Endothelial cell of umbilical vein (primary cell): ENCODE measurements at regions of chr12 and their contacts with region 1.

Region 1: DNA sequence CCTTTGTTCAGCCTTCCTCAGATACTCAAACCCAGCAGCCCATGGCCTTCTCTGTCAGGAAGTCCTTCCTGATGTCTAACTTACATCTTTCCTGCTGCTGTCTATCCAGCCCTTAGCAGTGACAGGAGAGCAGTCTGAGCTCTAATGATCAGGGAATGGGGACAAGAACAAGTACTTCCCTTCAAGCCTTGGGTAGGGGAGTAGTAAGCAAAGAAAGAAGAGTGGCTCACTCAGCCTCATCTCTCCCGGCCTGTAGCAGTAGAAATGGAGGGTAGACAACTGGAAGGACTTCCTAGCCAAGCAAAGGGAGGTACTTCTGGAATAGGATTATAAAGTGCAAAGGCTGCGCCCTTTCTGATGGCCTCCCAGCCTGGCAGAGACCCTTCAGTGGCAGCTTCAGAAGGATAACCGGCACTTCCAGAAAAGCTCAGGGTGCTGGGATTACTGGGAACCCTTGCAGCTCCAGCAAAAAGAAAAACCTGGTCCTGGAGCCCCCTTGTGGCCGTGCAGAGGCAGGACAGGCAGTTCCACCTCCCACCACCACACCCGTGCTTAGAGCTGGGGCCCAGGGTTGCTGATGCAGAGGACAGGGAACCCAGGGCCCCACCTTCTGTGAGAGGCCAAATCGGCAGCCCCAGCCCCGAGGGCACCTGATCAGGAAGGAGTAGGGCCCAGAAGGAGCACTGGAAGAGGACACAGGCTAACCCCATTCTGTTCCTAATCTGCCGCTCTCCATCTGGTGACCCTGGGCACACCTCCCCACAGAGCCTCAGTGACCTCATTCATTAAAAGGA is 12.4 kb upstream of the SMUG1 start:
- DNase-seq: peak; percentile 52
- H3K4me3 ChIP-seq: no peak overlapping the region
- H3K27ac ChIP-seq: no peak overlapping the region
- H3K4me1 ChIP-seq: no peaks in the 10 kb centered on the region
- H3K27me3 ChIP-seq: peaks cover 22 to 37% of the 10 kb centered on the region in 2 experiments
- CTCF ChIP-seq: peak; percentile 86 to 99
- POLR2A ChIP-seq: no peak

Region 2: GRCh38 chr12:53995378-53996239 is 205.6 kb before region 1 on chr12:
- CTCF ChIA-PET with region 1: interaction called, 17 read pairs
- POLR2A ChIA-PET with region 1: no interaction called
- dilution Hi-C with region 1: no loop called
- intact Hi-C with region 1: no loop called
- DNase-seq: no peak
- H3K4me3 ChIP-seq: peak overlapping the region in 1 of 3 experiments; percentile 23
- H3K27ac ChIP-seq: no peak overlapping the region
- H3K4me1 ChIP-seq: no peaks in the 10 kb centered on the region
- H3K27me3 ChIP-seq: peaks cover 85 to 99% of the 10 kb centered on the region in 2 experiments
- CTCF ChIP-seq: no peak
- POLR2A ChIP-seq: no peak

Region 3: GRCh38 chr12:54032627-54033100 is 168.5 kb before region 1 on chr12 and contains the start of gene HOXC5:
- CTCF ChIA-PET with region 1: interaction called, 91 read pairs
- POLR2A ChIA-PET with region 1: no interaction called
- dilution Hi-C with region 1: no loop called
- intact Hi-C with region 1: loop called (anchors 1 kb)
- DNase-seq: peak; percentile 37
- H3K4me3 ChIP-seq: no peak within 1 kb of the TSS
- H3K27ac ChIP-seq: no peak within 1 kb of the TSS
- H3K4me1 ChIP-seq: no peaks in the 10 kb centered on the region
- H3K27me3 ChIP-seq: peaks cover 79 to 88% of the 10 kb centered on the region in 2 experiments
- CTCF ChIP-seq: peak; percentile 79 to 81
- POLR2A ChIP-seq: no peak
- total RNA-seq, gene HOXC5: not detected in 2 replicates

Region 4: GRCh38 chr12:54184415-54184805 is 16.8 kb before region 1 on chr12:
- CTCF ChIA-PET with region 1: interaction called, 101 read pairs
- POLR2A ChIA-PET with region 1: no interaction called
- dilution Hi-C with region 1: no loop called
- intact Hi-C with region 1: no loop called
- DNase-seq: no peak
- H3K4me3 ChIP-seq: no peak overlapping the region
- H3K27ac ChIP-seq: no peak overlapping the region
- H3K4me1 ChIP-seq: no peaks in the 10 kb centered on the region
- H3K27me3 ChIP-seq: no peaks in the 10 kb centered on the region
- CTCF ChIP-seq: no peak
- POLR2A ChIP-seq: no peak

Region 5: DNA sequence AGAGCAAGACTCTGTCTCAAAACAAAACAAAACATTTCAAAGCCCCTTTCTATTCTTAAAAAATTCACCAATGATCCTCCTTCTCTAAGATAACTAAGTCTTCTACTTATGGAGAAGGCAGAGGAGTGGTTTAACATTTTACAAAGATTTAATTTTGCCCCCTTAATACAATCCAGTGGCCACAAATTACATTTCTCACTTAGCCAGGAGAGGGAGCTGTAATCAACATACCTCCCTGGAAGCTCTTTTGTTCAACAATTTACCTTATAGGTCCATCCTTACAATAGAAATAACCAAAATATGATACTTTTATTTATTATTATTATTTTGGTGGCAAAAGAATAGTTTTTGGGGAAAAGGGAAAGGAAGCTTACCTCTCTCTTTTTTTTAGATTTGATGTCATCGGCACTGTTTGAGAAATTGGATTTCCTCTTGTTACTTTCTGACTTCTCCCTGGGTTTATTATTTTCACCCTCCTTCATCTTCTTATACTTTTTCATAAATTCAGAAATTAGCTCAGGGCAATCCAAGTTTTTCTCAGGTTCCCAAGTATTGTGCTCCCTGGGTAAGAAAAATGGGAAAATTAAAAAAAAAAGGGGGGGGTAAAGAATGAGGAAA is 50.6 kb after region 1 on chr12:
- CTCF ChIA-PET with region 1: no interaction called
- POLR2A ChIA-PET with region 1: no interaction called
- dilution Hi-C with region 1: no loop called
- intact Hi-C with region 1: no loop called
- DNase-seq: peak; percentile 67
- H3K4me3 ChIP-seq: no peak overlapping the region
- H3K27ac ChIP-seq: no peak overlapping the region
- H3K4me1 ChIP-seq: no peaks in the 10 kb centered on the region
- H3K27me3 ChIP-seq: no peaks in the 10 kb centered on the region
- CTCF ChIP-seq: peak; percentile 43 to 46
- POLR2A ChIP-seq: no peak